ENCODE measurements at regions of chr1 and their contacts with region 1.

Region 1: GRCh38 chr1:150829743-150830142 is 21.7 kb upstream of the CTSK start:
- DNase-seq: no peak
- H3K4me3 Mint-ChIP-seq: no peak overlapping the region
- H3K27ac Mint-ChIP-seq: no peak overlapping the region
- H3K4me1 Mint-ChIP-seq: no peaks in the 10 kb centered on the region
- H3K27me3 Mint-ChIP-seq: no peaks in the 10 kb centered on the region

Region 2: GRCh38 chr1:150477733-150478132 is 352.0 kb before region 1 on chr1:
- intact Hi-C with region 1: loop called (anchors 10 kb)
- DNase-seq: no peak
- H3K4me3 Mint-ChIP-seq: no peak overlapping the region
- H3K27ac Mint-ChIP-seq: no peak overlapping the region
- H3K4me1 Mint-ChIP-seq: peaks cover 6% of the 10 kb centered on the region
- H3K27me3 Mint-ChIP-seq: no peaks in the 10 kb centered on the region

Measured in activated T-helper 1 cell treated with anti-CD3 and anti-CD28 coated beads, Interleukin-12 subunit alpha, Interleukin-12 subunit beta, Interleukin-2, Interleukin-4 antibody, amounts not matched to agents 30 ng/mL and 10 ng/mL and 1 ng/mL, durations not matched to agents 14 hours and 24 hours and 36 hours (primary cell).